B cell (primary cell): ENCODE measurements at regions of chr11 and their contacts with region 1.

Region 1: DNA sequence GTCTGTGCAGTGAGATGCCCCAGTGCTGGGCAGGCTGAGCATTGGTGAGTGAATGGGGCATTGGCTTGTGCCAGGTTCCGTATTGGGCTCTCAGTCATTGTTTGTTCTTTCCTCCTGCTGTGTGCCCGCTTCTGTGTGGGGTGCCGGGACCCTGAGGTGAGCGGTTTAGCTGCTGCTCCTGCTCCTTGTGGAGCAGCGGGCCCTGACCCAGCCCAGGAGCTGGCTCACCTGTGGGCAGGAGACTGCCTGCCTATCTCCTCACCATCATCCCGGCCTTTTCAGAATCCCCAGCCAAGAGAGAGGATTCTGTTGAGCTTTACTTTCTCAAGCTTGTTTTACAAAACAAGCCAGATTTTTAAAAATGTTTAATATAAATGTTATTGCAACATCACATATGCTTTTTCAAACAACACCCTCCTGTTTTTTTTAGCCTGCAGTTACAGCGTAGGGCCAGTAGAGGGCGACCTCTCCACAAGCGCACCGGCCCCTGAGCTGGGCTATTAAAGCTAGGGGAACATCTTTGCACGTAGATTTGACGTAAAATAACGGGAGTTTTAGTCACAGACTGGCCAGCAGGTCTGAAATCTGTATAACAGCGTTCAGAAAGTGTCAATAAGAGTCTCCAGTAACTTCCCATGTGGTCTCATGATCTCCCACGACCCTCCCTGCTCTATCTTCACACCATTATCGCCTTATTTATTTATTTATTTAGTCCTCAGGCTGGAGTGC is 25.1 kb upstream of the RELT start:
- DNase-seq: peak; percentile 85
- ATAC-seq: peak; percentile 96
- H3K4me3 ChIP-seq: no peak overlapping the region
- H3K4me3 Mint-ChIP-seq: no peak overlapping the region
- H3K27ac ChIP-seq: peak overlapping the region in 1 of 2 donors; percentile 46
- H3K27ac Mint-ChIP-seq: peak overlapping the region; percentile 41
- H3K4me1 ChIP-seq: peaks cover 0 to 4% of the 10 kb centered on the region in 2 donors
- H3K4me1 Mint-ChIP-seq: peaks cover 11% of the 10 kb centered on the region
- H3K27me3 ChIP-seq: no peaks in the 10 kb centered on the region
- H3K27me3 Mint-ChIP-seq: peaks cover 5% of the 10 kb centered on the region
- CTCF ChIP-seq: peak; percentile 97

Region 2: GRCh38 chr11:73307323-73308002 is 43.6 kb before region 1 on chr11:
- CTCF ChIA-PET with region 1: interaction called, 11 read pairs
- POLR2A ChIA-PET with region 1: no interaction called
- intact Hi-C with region 1: no loop called
- DNase-seq: peak; percentile 91
- ATAC-seq: peak; percentile 76
- H3K4me3 ChIP-seq: peak overlapping the region; percentile 51 to 84 (median 65)
- H3K4me3 Mint-ChIP-seq: peak overlapping the region; percentile 89
- H3K27ac ChIP-seq: no peak overlapping the region
- H3K27ac Mint-ChIP-seq: peak overlapping the region; percentile 51
- H3K4me1 ChIP-seq: peaks cover 20 to 25% of the 10 kb centered on the region in 2 donors
- H3K4me1 Mint-ChIP-seq: peaks cover 13% of the 10 kb centered on the region
- H3K27me3 ChIP-seq: peaks cover 0 to 52% (median 18%) of the 10 kb centered on the region in 4 experiments
- H3K27me3 Mint-ChIP-seq: peaks cover 24% of the 10 kb centered on the region
- CTCF ChIP-seq: peak; percentile 72

Region 3: GRCh38 chr11:73376160-73376802 is 25.2 kb after region 1 on chr11 and contains the start of gene RELT:
- CTCF ChIA-PET with region 1: interaction called, 101 read pairs
- POLR2A ChIA-PET with region 1: interaction called, 4 read pairs
- intact Hi-C with region 1: loop called (anchors 1 kb)
- DNase-seq: peak; percentile 97
- ATAC-seq: peak; percentile 87
- H3K4me3 ChIP-seq: peak within 1 kb of the TSS; percentile 62 to 95 (median 92)
- H3K4me3 Mint-ChIP-seq: peak within 1 kb of the TSS; percentile 100
- H3K27ac ChIP-seq: peak within 1 kb of the TSS; percentile 98
- H3K27ac Mint-ChIP-seq: peak within 1 kb of the TSS; percentile 99
- H3K4me1 ChIP-seq: peaks cover 65 to 83% of the 10 kb centered on the region in 2 donors
- H3K4me1 Mint-ChIP-seq: peaks cover 75% of the 10 kb centered on the region
- H3K27me3 ChIP-seq: no peaks in the 10 kb centered on the region
- H3K27me3 Mint-ChIP-seq: no peaks in the 10 kb centered on the region
- CTCF ChIP-seq: peak; percentile 94
- total RNA-seq, gene RELT: 92.4 and 97.1 TPM in 2 replicates

Region 4: DNA sequence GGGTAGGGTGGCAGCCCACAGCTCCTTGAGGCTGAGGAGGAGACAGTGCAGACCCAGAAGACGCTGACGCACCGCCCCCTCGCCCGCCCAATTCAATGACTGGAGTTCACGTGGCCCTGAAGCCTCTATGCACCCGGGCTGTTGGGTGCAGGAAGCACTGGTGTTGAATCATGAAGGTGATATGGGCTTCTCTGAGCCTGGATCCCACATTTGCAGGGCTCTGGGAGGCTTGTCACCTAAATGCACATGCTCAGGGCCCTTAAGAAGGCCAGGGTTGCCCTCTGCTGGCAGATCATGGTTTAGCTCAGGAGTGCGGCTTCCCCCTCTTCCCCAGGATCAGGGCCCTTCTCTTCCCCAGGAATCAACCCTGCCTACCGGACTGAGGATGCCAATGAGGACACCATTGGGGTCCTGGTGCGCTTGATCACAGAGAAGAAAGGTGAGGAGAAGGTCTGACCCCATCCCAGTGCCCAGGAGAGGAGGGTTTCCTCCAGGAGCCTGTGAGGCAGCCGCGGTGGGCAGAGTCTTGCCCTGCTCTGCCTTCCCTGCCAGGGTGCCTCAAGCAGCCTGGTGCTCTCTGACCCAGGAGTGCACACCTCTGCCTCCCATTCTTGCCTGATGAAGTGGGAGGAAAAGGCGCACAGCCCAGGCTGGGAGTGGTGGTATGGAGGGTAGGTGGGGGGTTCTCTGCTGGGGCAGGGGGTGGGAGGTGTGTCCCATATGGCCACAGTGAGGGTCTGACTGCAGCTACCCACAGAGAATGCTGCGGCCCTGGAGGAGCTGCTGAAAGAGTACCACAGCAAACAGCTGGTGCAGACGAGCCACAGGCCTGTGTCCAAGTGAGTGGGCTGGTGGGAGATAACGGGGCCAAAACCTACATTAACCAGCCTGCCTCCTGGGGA is 42.7 kb after region 1 on chr11:
- CTCF ChIA-PET with region 1: interaction called, 352 read pairs
- POLR2A ChIA-PET with region 1: interaction called, 11 read pairs
- intact Hi-C with region 1: loop called (anchors 1 kb)
- DNase-seq: peak; percentile 82
- ATAC-seq: peak; percentile 77
- H3K4me3 ChIP-seq: no peak overlapping the region
- H3K4me3 Mint-ChIP-seq: no peak overlapping the region
- H3K27ac ChIP-seq: peak overlapping the region in 1 of 2 donors; percentile 61
- H3K27ac Mint-ChIP-seq: peak overlapping the region; percentile 74
- H3K4me1 ChIP-seq: peaks cover 19 to 35% of the 10 kb centered on the region in 2 donors
- H3K4me1 Mint-ChIP-seq: peaks cover 30% of the 10 kb centered on the region
- H3K27me3 ChIP-seq: no peaks in the 10 kb centered on the region
- H3K27me3 Mint-ChIP-seq: no peaks in the 10 kb centered on the region
- CTCF ChIP-seq: peak; percentile 78

Region 5: DNA sequence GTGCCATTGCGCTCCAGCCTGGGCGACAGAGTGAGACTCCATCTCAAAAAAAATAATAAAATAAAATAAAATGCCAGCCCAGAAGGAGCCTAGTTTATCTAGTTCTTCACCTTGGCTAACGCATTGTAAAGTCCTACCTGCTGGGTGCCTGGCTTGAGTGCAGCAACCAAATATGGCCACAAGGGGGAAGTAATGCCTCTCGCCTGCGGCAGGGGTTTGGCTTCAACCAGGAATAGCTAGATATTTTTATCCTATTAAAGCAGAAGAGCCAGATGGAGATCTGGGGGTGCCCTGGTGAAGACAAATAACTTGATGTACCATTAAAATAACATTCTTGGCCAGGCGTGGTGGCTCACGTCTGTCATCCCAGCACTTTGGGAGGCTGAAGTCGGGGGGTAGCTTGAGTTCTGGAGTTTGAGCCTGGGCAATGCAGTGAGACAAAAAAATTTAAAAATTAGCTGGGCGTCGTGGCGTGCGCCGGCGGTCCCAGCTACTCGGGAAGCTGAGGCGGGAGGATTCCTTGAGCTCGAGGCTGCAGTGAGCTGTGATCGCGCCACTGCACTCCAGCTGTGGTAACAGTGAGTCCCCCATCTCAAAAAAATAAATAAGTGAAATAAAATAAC is 274.7 kb after region 1 on chr11:
- CTCF ChIA-PET with region 1: interaction called, 33 read pairs
- POLR2A ChIA-PET with region 1: no interaction called
- intact Hi-C with region 1: no loop called
- DNase-seq: peak; percentile 75
- ATAC-seq: peak; percentile 89
- H3K4me3 ChIP-seq: no peak overlapping the region
- H3K4me3 Mint-ChIP-seq: no peak overlapping the region
- H3K27ac ChIP-seq: no peak overlapping the region
- H3K27ac Mint-ChIP-seq: no peak overlapping the region
- H3K4me1 ChIP-seq: peaks cover 7 to 14% of the 10 kb centered on the region in 2 donors
- H3K4me1 Mint-ChIP-seq: peaks cover 8% of the 10 kb centered on the region
- H3K27me3 ChIP-seq: peaks cover 0 to 11% (median 0%) of the 10 kb centered on the region in 4 experiments
- H3K27me3 Mint-ChIP-seq: peaks cover 6% of the 10 kb centered on the region
- CTCF ChIP-seq: peak; percentile 91

Region 6: GRCh38 chr11:74877132-74877531 is 1526.1 kb after region 1 on chr11:
- CTCF ChIA-PET with region 1: no interaction called
- POLR2A ChIA-PET with region 1: no interaction called
- intact Hi-C with region 1: no loop called
- DNase-seq: no peak
- ATAC-seq: no peak
- H3K4me3 ChIP-seq: no peak overlapping the region
- H3K4me3 Mint-ChIP-seq: no peak overlapping the region
- H3K27ac ChIP-seq: no peak overlapping the region
- H3K27ac Mint-ChIP-seq: no peak overlapping the region
- H3K4me1 ChIP-seq: no peaks in the 10 kb centered on the region
- H3K4me1 Mint-ChIP-seq: no peaks in the 10 kb centered on the region
- H3K27me3 ChIP-seq: no peaks in the 10 kb centered on the region
- H3K27me3 Mint-ChIP-seq: no peaks in the 10 kb centered on the region
- CTCF ChIP-seq: peak; percentile 67